Activated B cell treated with CpG ODN at 0.5 μM for 24 hours (primary cell): ENCODE measurements at regions of chr6 and their contacts with region 1.

Region 1: DNA sequence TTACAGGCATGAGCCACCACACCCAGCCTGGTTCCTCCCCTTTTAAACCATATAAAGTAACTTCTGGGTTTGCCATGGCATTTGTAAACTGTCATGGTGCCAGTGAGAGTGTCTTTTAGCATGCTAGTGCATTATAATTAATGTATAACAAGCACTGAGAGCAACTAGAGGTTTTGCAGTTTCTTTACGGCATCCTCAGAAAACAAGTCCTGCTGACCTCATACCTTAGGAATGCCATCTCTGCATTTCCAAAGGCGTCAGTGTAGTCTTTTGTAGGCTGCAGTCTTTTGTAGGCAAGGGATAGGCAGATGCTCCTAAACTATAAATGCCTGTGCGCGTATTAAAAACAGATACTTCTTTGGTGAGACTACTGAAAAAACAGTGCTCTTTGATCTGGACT is 75.0 kb upstream of the EZR start:
- DNase-seq: no peak
- ATAC-seq: no peak
- H3K4me3 Mint-ChIP-seq: no peak overlapping the region
- H3K27ac Mint-ChIP-seq: no peak overlapping the region
- H3K4me1 Mint-ChIP-seq: peaks cover 5% of the 10 kb centered on the region
- H3K27me3 Mint-ChIP-seq: no peaks in the 10 kb centered on the region
- CTCF ChIP-seq: no peak

Region 2: GRCh38 chr6:158938811-158939254 is 44.6 kb after region 1 on chr6:
- CTCF ChIA-PET with region 1: no interaction called
- POLR2A ChIA-PET with region 1: no interaction called
- intact Hi-C with region 1: no loop called
- DNase-seq: no peak
- ATAC-seq: peak; percentile 76
- H3K4me3 Mint-ChIP-seq: peak overlapping the region; percentile 79
- H3K27ac Mint-ChIP-seq: peak overlapping the region; percentile 36
- H3K4me1 Mint-ChIP-seq: peaks cover 24% of the 10 kb centered on the region
- H3K27me3 Mint-ChIP-seq: no peaks in the 10 kb centered on the region
- CTCF ChIP-seq: no peak

Region 3: GRCh38 chr6:158987657-158988056 is 93.5 kb after region 1 on chr6:
- CTCF ChIA-PET with region 1: no interaction called
- POLR2A ChIA-PET with region 1: interaction called, 10 read pairs
- intact Hi-C with region 1: no loop called
- DNase-seq: no peak
- ATAC-seq: no peak
- H3K4me3 Mint-ChIP-seq: no peak overlapping the region
- H3K27ac Mint-ChIP-seq: no peak overlapping the region
- H3K4me1 Mint-ChIP-seq: peaks cover 3% of the 10 kb centered on the region
- H3K27me3 Mint-ChIP-seq: no peaks in the 10 kb centered on the region
- CTCF ChIP-seq: no peak